ENCODE measurements at regions of chr2 and their contacts with region 1.

Region 1: DNA sequence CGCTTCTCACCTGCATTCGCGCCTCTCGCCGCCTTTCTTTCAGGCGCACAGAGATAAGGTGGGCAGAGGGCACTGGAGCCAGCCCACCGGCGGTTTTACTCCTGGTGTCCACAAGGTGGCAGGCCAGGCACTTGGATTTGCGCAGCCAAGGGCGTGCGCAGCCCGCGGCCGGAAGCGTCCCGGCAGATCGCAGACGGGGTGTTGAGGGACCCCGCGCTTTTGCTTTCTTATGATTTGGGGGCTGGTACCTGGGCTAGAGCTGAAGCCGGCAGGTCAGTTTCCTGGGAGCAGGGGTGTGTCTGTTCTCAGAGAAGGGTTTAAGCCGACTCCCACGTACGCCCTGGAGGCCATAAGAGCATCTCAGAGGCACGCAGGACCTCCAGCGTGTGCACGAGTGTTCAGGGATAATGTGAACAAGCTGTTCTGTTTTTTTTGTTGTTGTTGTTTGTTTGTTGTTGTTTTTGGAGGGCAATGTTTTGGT is 305.6 kb upstream of the CXCR4 start:
- DNase-seq: peak; percentile 93
- ATAC-seq: peak; percentile 98
- H3K4me3 Mint-ChIP-seq: peak overlapping the region; percentile 70
- H3K27ac Mint-ChIP-seq: peak overlapping the region; percentile 56
- H3K4me1 Mint-ChIP-seq: peaks cover 18% of the 10 kb centered on the region
- H3K27me3 Mint-ChIP-seq: peaks cover 43% of the 10 kb centered on the region

Region 2: GRCh38 chr2:135820003-135820618 is 603.4 kb before region 1 on chr2:
- CTCF ChIA-PET with region 1: no interaction called
- POLR2A ChIA-PET with region 1: no interaction called
- intact Hi-C with region 1: loop called in 1 of 2 experiments (anchors 1 kb)
- DNase-seq: peak; percentile 94
- ATAC-seq: peak; percentile 93
- H3K4me3 Mint-ChIP-seq: peak overlapping the region; percentile 71
- H3K27ac Mint-ChIP-seq: peak overlapping the region; percentile 87
- H3K4me1 Mint-ChIP-seq: peaks cover 45% of the 10 kb centered on the region
- H3K27me3 Mint-ChIP-seq: no peaks in the 10 kb centered on the region

Region 3: GRCh38 chr2:136653861-136654260 is 230.3 kb after region 1 on chr2:
- CTCF ChIA-PET with region 1: no interaction called
- POLR2A ChIA-PET with region 1: no interaction called
- intact Hi-C with region 1: loop called in 1 of 2 experiments (anchors 10 kb)
- DNase-seq: no peak
- ATAC-seq: no peak
- H3K4me3 Mint-ChIP-seq: no peak overlapping the region
- H3K27ac Mint-ChIP-seq: no peak overlapping the region
- H3K4me1 Mint-ChIP-seq: no peaks in the 10 kb centered on the region
- H3K27me3 Mint-ChIP-seq: peaks cover 12% of the 10 kb centered on the region

Region 4: DNA sequence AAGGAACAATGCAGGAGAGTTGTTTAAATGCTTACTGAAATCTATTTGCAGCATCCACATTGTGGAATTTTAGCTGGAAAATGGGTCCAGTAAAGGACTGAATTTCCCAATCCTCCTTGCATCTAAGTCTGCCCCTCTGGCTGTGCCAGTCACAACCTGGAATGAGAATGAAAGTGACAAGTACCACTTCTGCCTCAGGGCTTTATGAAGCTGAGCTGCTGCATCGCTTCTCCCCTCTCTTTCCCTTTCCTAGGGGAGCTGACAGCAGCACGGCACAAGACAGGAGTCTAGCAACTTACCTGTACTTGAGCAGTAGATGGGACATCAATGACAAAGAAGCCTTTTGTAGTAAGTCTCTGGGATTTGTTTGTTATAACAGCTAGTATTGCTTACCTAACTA is 314.5 kb after region 1 on chr2:
- CTCF ChIA-PET with region 1: interaction called, 5 read pairs
- POLR2A ChIA-PET with region 1: no interaction called
- intact Hi-C with region 1: loop called (anchors 1 to 10 kb)
- DNase-seq: no peak
- ATAC-seq: no peak
- H3K4me3 Mint-ChIP-seq: no peak overlapping the region
- H3K27ac Mint-ChIP-seq: no peak overlapping the region
- H3K4me1 Mint-ChIP-seq: no peaks in the 10 kb centered on the region
- H3K27me3 Mint-ChIP-seq: peaks cover 14% of the 10 kb centered on the region